ENCODE measurements at regions of chr9 and their contacts with region 1.

Region 1: DNA sequence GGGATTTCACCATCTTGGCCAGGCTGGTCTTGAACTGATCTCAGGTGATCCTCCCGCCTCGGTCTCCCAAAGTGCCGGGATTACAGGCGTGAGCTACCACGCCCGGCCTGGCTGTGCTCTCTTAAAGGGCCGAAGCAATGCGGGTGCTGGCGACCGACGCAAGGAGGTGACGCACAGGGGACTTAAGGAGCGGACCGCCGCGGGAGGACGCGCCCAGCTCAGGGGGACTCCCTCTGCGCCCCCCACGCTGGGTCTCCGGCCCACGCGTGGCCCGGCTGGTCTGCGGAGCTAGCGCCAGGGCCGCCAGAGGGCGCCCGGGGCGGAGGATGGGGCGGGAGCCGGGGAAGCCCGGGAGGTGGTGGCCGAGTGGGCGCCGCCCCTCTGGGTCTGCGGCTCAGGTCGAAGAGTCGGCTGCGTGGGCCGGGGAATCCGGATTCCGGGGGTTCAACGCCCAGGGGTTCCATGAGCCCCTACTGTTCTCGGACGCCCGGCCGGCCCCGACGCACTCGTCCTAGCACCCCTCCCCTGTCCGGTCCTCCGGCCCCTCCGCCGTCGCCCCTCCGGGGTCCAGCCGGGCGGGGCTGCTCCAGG is 502 bp upstream of the CERCAM start:
- ATAC-seq: peak; percentile 68 to 85 (median 80)
- H3K4me3 ChIP-seq: peak overlapping the region; percentile 60 to 79 (median 71)
- H3K27ac ChIP-seq: peak overlapping the region; percentile 76 to 81
- H3K4me1 ChIP-seq: peaks cover 19 to 28% of the 10 kb centered on the region in 2 donors

Region 2: GRCh38 chr9:128081056-128081455 is 339.1 kb before region 1 on chr9:
- in situ Hi-C with region 1: no loop called
- ATAC-seq: peak; percentile 41 to 93 (median 84)
- H3K4me3 ChIP-seq: no peak overlapping the region
- H3K27ac ChIP-seq: peak overlapping the region; percentile 50 to 65
- H3K4me1 ChIP-seq: peaks cover 24 to 28% of the 10 kb centered on the region in 2 donors

Region 3: DNA sequence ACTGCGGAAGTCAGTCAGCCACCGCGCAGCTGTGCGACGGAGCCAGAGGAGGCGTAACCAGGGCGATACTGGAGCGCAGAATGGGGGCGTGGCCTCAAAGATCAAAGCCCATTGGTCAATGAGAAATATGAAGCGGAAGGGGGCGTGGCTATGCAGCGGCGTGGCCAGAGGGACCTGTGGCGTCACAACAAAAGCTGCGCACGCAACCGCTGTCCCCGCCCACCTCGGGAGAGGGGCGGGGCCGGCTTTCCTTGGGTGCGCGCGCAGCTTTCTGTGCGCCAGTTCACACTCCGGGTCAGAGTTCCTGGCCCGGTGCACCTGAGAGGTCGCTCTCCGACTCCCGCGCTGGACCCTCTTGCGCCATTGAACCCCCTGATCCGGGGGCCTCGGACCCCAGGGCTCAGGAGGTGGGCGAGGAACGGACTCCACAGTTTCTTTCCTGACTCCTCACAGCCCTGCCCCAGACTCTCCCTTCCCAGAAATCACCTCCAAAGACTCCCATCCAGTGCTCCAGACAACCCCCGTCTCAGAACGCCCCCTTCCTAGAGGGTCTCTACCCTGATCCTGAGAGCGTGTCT is 144.1 kb before region 1 on chr9 and contains the starts of genes GOLGA2 and SWI5:
- in situ Hi-C with region 1: loop called in 1 of 9 experiments (anchors 25 kb)
- ATAC-seq: peak; percentile 83 to 95 (median 92)
- H3K4me3 ChIP-seq: peak within 1 kb of the TSS; percentile 75 to 95 (median 86)
- H3K27ac ChIP-seq: peak within 1 kb of the TSS; percentile 89 to 96
- H3K4me1 ChIP-seq: peaks cover 12 to 20% of the 10 kb centered on the region in 2 donors
- total RNA-seq, gene GOLGA2: 41.0 to 109 (median 91.7) TPM
- total RNA-seq, gene SWI5: 29.4 to 55.4 (median 43.2) TPM

Region 4: DNA sequence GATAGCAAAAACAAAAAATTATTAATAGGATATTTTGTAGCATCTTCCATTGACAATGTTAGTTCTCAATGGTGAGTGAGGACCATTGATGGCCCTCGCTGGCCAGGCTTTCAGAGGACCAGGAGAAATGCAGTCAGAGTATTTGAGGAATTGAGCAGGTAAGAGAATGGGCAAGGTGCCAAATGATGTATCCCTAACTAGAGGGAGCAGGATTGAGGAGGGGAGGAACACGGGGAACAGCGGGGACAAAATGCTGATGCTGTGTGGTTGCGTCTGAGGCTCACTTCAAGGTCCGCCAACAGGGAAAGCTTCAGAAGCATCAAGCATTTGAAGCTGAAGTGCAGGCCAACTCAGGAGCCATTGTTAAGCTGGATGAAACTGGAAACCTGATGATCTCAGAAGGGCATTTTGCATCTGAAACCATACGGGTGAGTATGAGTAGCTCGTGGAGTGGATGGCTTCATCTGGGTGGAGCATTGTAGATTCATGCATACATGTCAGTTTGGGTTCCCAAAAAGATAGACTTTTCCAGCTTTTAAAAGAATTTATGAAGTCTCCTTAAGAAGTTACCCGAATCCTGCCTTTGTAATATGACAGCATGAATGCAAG is 148.4 kb after region 1 on chr9:
- in situ Hi-C with region 1: no loop called
- ATAC-seq: peak; percentile 68 to 95 (median 82)
- H3K4me3 ChIP-seq: no peak overlapping the region
- H3K27ac ChIP-seq: no peak overlapping the region
- H3K4me1 ChIP-seq: no peaks in the 10 kb centered on the region

Measured in motor neuron (in vitro differentiated cells).